ENCODE measurements at regions of chr4 and their contacts with region 1.

Region 1: GRCh38 chr4:74874753-74875367 is 58.1 kb upstream of the PARM1 start:
- DNase-seq: peak; percentile 67
- H3K4me3 ChIP-seq: no peak overlapping the region
- H3K27ac ChIP-seq: no peak overlapping the region
- H3K4me1 ChIP-seq: peaks cover 2% of the 10 kb centered on the region
- H3K27me3 ChIP-seq: peaks cover 1 to 9% of the 10 kb centered on the region in 2 experiments
- CTCF ChIP-seq: peak; percentile 72 to 89
- POLR2A ChIP-seq: no peak

Region 2: GRCh38 chr4:74098450-74098994 is 776.3 kb before region 1 on chr4:
- CTCF ChIA-PET with region 1: no interaction called
- POLR2A ChIA-PET with region 1: no interaction called
- dilution Hi-C with region 1: no loop called
- intact Hi-C with region 1: no loop called
- DNase-seq: peak; percentile 38
- H3K4me3 ChIP-seq: peak overlapping the region; percentile 46 to 85 (median 69)
- H3K27ac ChIP-seq: peak overlapping the region; percentile 83
- H3K4me1 ChIP-seq: peaks cover 32% of the 10 kb centered on the region
- H3K27me3 ChIP-seq: no peaks in the 10 kb centered on the region
- CTCF ChIP-seq: no peak
- POLR2A ChIP-seq: no peak

Region 3: GRCh38 chr4:74308215-74308614 is 566.6 kb before region 1 on chr4 and contains the start of gene EPGN:
- CTCF ChIA-PET with region 1: no interaction called
- POLR2A ChIA-PET with region 1: no interaction called
- dilution Hi-C with region 1: no loop called
- intact Hi-C with region 1: no loop called
- DNase-seq: no peak
- H3K4me3 ChIP-seq: no peak within 1 kb of the TSS
- H3K27ac ChIP-seq: no peak within 1 kb of the TSS
- H3K4me1 ChIP-seq: no peaks in the 10 kb centered on the region
- H3K27me3 ChIP-seq: no peaks in the 10 kb centered on the region
- CTCF ChIP-seq: no peak
- POLR2A ChIP-seq: no peak
- total RNA-seq, gene EPGN: 1.2 TPM in 1 of 2 replicates, not detected in the other

Region 4: GRCh38 chr4:74451200-74451661 is 423.6 kb before region 1 on chr4:
- CTCF ChIA-PET with region 1: no interaction called
- POLR2A ChIA-PET with region 1: no interaction called
- dilution Hi-C with region 1: no loop called
- intact Hi-C with region 1: no loop called
- DNase-seq: peak; percentile 72
- H3K4me3 ChIP-seq: no peak overlapping the region
- H3K27ac ChIP-seq: peak overlapping the region; percentile 12
- H3K4me1 ChIP-seq: peaks cover 13% of the 10 kb centered on the region
- H3K27me3 ChIP-seq: no peaks in the 10 kb centered on the region
- CTCF ChIP-seq: no peak
- POLR2A ChIP-seq: no peak

Region 5: GRCh38 chr4:74855879-74856278 is 19.0 kb before region 1 on chr4:
- CTCF ChIA-PET with region 1: interaction called, 15 read pairs
- POLR2A ChIA-PET with region 1: no interaction called
- dilution Hi-C with region 1: no loop called
- intact Hi-C with region 1: no loop called
- DNase-seq: no peak
- H3K4me3 ChIP-seq: no peak overlapping the region
- H3K27ac ChIP-seq: no peak overlapping the region
- H3K4me1 ChIP-seq: no peaks in the 10 kb centered on the region
- H3K27me3 ChIP-seq: no peaks in the 10 kb centered on the region
- CTCF ChIP-seq: no peak
- POLR2A ChIP-seq: no peak

Region 6: DNA sequence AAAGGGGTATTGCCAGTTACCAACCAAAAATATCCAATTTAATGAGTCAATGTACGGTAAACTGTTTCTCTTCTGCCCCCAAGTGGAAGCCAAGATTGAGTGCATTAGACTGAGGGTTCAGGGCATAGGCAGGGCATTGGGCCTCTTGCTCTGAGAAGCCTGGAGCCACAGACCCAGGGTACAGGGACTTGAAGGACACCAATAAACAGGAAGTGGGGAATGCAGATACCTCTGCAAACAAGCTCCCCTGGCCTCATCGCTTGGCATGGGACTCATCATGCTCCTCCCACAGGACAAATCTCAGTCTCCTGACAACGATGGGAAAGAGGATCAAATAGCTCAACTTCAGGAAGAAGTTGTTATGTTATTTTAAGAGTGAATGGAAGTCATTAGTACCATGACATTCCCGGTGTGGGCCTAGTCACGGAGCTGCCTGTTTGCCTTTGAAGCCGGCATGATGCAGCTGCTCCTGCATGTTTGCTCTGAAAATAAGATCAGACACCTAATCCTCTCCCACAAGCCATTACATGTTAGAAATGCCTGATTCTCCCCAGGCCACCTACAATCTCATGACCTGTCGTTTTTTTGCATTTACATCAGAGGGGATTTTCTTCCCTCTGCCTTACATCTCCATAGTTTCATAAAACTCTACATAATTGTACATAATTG is 415.2 kb after region 1 on chr4:
- CTCF ChIA-PET with region 1: interaction called, 47 read pairs
- POLR2A ChIA-PET with region 1: no interaction called
- dilution Hi-C with region 1: no loop called
- intact Hi-C with region 1: loop called (anchors 1 kb)
- DNase-seq: no peak
- H3K4me3 ChIP-seq: no peak overlapping the region
- H3K27ac ChIP-seq: no peak overlapping the region
- H3K4me1 ChIP-seq: no peaks in the 10 kb centered on the region
- H3K27me3 ChIP-seq: no peaks in the 10 kb centered on the region
- CTCF ChIP-seq: peak; percentile 30 to 32
- POLR2A ChIP-seq: no peak

Region 7: GRCh38 chr4:75477201-75477600 is 602.3 kb after region 1 on chr4:
- CTCF ChIA-PET with region 1: no interaction called
- POLR2A ChIA-PET with region 1: no interaction called
- dilution Hi-C with region 1: no loop called
- intact Hi-C with region 1: loop called (anchors 10 kb)
- DNase-seq: no peak
- H3K4me3 ChIP-seq: no peak overlapping the region
- H3K27ac ChIP-seq: no peak overlapping the region
- H3K4me1 ChIP-seq: no peaks in the 10 kb centered on the region
- H3K27me3 ChIP-seq: no peaks in the 10 kb centered on the region
- CTCF ChIP-seq: no peak
- POLR2A ChIP-seq: no peak

Region 8: GRCh38 chr4:75844151-75844662 is 969.3 kb after region 1 on chr4:
- CTCF ChIA-PET with region 1: interaction called, 10 read pairs
- POLR2A ChIA-PET with region 1: no interaction called
- dilution Hi-C with region 1: no loop called
- intact Hi-C with region 1: no loop called
- DNase-seq: peak; percentile 14
- H3K4me3 ChIP-seq: no peak overlapping the region
- H3K27ac ChIP-seq: no peak overlapping the region
- H3K4me1 ChIP-seq: peaks cover 12% of the 10 kb centered on the region
- H3K27me3 ChIP-seq: no peaks in the 10 kb centered on the region
- CTCF ChIP-seq: no peak
- POLR2A ChIP-seq: no peak

Measured in endothelial cell of umbilical vein (primary cell).